Mucosa of descending colon (tissue), 3 donors: ENCODE measurements at regions of chr18 and their contacts with region 1.

Region 1: GRCh38 chr18:32470713-32471633 is at the start of gene GAREM1:
- DNase-seq: peak; percentile 95 to 96 (median 96)
- ATAC-seq: peak; percentile 95
- H3K4me3 ChIP-seq: peak within 1 kb of the TSS; percentile 54
- H3K4me1 ChIP-seq: peaks cover 9% of the 10 kb centered on the region
- CTCF ChIP-seq: peak; percentile 72
- total RNA-seq, gene GAREM1: 14.5 to 29.0 (median 19.6) TPM

Region 2: GRCh38 chr18:32158108-32158624 is 312.8 kb before region 1 on chr18:
- intact Hi-C with region 1: loop called in 1 of 2 experiments (anchors 5 kb)
- DNase-seq: peak; percentile 78 to 89 (median 84)
- ATAC-seq: peak; percentile 90
- H3K4me3 ChIP-seq: no peak overlapping the region
- H3K4me1 ChIP-seq: peaks cover 16% of the 10 kb centered on the region
- CTCF ChIP-seq: peak; percentile 66

Region 3: DNA sequence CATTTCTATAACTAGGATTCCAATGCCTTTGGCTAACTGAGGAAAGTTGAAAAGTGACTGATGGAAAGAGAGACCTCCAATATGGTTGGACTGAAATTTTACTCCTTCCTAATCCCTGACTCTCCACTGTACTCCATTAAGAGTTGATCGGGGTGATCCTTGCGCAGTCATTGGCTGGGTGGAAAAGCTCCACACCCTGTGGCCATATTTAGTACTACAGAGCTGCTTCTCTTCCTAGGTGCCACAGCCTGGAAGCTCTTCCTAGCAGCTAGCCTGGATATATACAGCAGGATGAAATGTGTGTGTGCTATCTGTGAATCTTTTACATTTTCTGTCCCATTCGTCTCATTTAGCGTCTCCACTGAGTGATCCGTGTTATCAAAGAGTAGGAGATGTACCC is 210.0 kb before region 1 on chr18:
- intact Hi-C with region 1: loop called in 1 of 2 experiments (anchors 10 kb)
- DNase-seq: no peak
- ATAC-seq: no peak
- H3K4me3 ChIP-seq: no peak overlapping the region
- H3K4me1 ChIP-seq: peaks cover 5% of the 10 kb centered on the region
- CTCF ChIP-seq: no peak

Region 4: GRCh38 chr18:32271672-32272208 is 199.2 kb before region 1 on chr18:
- intact Hi-C with region 1: loop called (anchors 5 to 10 kb)
- DNase-seq: no peak
- ATAC-seq: peak; percentile 71
- H3K4me3 ChIP-seq: no peak overlapping the region
- H3K4me1 ChIP-seq: peaks cover 13% of the 10 kb centered on the region
- CTCF ChIP-seq: no peak

Region 5: DNA sequence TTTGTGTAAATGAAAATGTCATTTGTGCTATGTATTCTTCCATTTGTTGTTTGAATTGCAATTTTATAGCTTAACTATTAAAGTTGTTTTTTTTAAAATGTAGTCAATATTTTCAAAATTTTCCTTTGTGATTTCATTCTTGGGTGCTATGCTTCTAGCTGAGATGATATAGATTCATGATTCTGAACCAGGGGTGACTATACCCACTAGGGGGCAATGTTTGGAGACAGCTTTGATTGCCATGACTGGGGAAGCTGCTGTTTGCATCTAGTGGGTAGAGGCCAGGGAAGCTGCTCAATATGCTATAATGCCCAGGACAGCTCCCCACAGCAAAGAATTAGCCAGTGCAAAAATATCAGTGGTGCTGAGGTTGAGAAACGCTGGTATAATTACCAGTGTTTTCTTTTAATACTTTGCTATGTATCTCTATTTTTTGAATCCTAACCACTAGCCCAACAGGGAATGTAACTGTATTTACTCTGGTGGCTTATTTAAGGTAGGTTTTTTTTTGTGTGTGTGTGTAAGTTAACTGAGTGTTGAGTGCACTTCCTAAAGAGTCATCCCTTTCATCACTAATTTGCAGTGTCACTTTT is 181.4 kb before region 1 on chr18:
- intact Hi-C with region 1: loop called in 1 of 2 experiments (anchors 10 kb)
- DNase-seq: peak in 1 of 3 donors; percentile 85
- ATAC-seq: peak; percentile 91
- H3K4me3 ChIP-seq: no peak overlapping the region
- H3K4me1 ChIP-seq: no peaks in the 10 kb centered on the region
- CTCF ChIP-seq: peak; percentile 62

Region 6: DNA sequence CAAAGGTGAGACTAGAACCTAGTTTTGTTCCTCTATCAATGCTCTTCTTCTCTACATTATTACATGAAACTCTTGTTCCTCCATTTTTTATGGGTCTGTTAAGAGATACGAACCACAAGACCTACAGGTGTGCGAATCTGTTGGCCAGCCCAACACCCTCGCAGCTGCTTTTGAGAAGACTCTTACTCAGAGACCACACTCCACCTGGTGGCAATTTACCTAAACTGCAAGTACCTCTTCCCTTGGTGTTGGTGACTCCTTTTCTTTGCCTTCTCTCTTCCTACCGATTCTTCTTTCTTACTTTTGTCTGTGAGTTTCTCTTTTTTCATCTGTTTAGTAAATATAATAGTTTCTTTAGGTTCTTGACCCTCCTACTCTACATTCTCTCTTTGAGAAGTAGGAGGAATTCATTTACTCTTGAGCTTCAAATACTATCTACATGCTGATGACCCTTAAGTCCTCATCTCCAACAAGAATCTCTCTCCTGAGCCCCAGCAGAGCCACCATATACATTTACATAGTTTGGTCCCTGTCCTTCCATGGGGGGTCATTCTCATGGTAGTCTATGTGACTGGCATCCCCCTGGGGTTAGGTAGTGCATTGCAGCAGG is 81.6 kb after region 1 on chr18:
- intact Hi-C with region 1: loop called in 1 of 2 experiments (anchors 10 kb)
- DNase-seq: peak in 2 of 3 donors; percentile 33 to 90
- ATAC-seq: peak; percentile 93
- H3K4me3 ChIP-seq: no peak overlapping the region
- H3K4me1 ChIP-seq: no peaks in the 10 kb centered on the region
- CTCF ChIP-seq: peak; percentile 71